ENCODE measurements at regions of chr15 and their contacts with region 1.

Region 1: DNA sequence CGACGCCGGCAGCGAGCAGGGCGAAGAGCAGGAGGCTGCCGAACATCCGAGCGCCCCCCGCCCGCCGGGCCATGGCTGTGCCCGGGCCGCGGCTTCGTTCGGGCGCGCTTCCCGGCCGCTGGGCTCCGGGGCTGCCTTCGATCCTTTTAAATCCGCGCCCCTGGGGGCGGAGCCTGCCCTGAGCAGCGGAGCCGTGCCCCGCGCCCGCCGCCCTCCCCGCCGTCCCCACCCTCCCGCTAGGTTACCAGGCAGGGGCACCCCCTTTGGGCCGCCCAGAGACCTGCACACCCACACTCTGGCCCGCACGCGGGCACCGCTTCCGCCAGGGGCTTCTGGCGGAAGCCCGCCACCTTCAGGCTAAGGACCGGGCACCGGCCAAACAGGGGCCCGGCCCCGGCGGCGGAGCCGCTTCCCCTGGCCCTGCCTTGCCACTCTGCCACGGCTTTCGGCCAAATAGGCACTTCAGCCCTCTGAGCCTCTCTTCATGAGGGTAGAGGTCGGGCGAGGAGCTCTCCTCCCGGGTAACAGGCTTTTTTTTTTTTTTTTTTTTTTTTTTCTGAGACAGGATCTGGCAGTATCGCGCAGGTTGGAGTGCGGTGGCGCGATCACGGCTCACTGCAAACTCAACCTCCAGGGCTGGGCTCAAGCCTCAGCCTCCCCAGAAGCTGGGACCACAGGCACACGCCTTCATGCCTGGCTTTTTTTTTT is at the start of gene NMB:
- DNase-seq: peak; percentile 89
- ATAC-seq: peak; percentile 56
- H3K4me3 Mint-ChIP-seq: peak within 1 kb of the TSS; percentile 69
- H3K27ac Mint-ChIP-seq: peak within 1 kb of the TSS; percentile 66
- H3K4me1 Mint-ChIP-seq: peaks cover 30% of the 10 kb centered on the region
- H3K27me3 Mint-ChIP-seq: no peaks in the 10 kb centered on the region
- total RNA-seq, gene NMB: 2.7 to 4.0 TPM

Region 2: GRCh38 chr15:84588053-84588874 is 70.0 kb before region 1 on chr15:
- CTCF ChIA-PET with region 1: interaction called, 4 read pairs
- POLR2A ChIA-PET with region 1: no interaction called
- intact Hi-C with region 1: loop called (anchors 1 kb)
- DNase-seq: peak; percentile 93
- ATAC-seq: peak; percentile 100
- H3K4me3 Mint-ChIP-seq: peak overlapping the region; percentile 35
- H3K27ac Mint-ChIP-seq: no peak overlapping the region
- H3K4me1 Mint-ChIP-seq: peaks cover 2% of the 10 kb centered on the region
- H3K27me3 Mint-ChIP-seq: no peaks in the 10 kb centered on the region

Region 3: DNA sequence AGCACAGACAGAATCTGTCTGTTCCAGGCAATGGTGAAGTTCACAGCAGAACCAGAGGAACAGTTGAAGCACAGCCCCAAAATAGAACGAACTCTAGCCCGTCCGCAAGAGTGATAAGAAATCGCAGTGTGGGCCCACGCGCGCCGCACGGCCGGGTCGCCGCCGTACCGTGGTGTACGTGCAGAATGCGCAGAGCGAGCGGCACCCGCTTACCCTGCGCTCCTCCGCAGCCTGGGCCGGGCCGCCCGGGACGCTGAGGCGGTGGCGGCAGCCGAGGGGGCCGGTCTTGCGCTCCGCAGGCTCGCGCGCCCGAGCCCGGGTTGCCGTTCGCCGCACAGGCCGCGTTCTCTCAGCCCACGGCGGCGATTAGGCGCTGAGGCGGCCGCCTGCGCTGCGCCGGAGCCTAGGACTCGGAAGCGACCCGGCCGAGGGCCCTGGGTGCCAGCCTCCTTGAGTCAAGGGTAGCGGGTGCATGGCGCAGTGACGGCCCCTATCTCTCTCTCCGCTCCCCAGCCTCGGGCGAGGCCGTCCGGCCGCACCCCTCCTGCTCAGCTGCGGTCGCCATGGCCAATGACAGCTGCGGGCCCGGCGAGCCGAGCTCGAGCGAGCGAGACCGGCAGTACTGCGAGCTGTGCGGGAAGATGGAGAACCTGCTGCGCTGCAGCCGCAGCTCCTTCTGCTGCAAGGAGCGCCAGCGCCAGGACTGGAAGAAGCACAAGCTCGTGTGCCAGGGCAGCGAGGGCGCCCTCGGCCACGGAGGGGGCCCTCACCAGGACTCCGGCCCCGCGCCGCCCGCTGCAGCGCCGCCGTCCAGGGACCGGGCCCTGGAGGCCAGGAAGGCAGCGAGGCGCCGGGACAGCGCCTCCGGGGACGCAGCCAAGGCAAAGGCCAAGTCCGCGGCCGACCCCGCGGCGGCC is 24.7 kb before region 1 on chr15:
- CTCF ChIA-PET with region 1: interaction called, 6 read pairs
- POLR2A ChIA-PET with region 1: interaction called, 4 read pairs
- intact Hi-C with region 1: loop called (anchors 1 kb)
- DNase-seq: peak; percentile 87
- ATAC-seq: peak; percentile 57
- H3K4me3 Mint-ChIP-seq: peak overlapping the region; percentile 93
- H3K27ac Mint-ChIP-seq: peak overlapping the region; percentile 99
- H3K4me1 Mint-ChIP-seq: peaks cover 45% of the 10 kb centered on the region
- H3K27me3 Mint-ChIP-seq: no peaks in the 10 kb centered on the region

Region 4: GRCh38 chr15:84716036-84716799 is 58.0 kb after region 1 on chr15 and contains the start of gene SEC11A:
- CTCF ChIA-PET with region 1: interaction called, 4 read pairs
- POLR2A ChIA-PET with region 1: interaction called, 5 read pairs
- intact Hi-C with region 1: loop called (anchors 1 kb)
- DNase-seq: peak; percentile 94
- ATAC-seq: peak; percentile 89
- H3K4me3 Mint-ChIP-seq: peak within 1 kb of the TSS; percentile 98
- H3K27ac Mint-ChIP-seq: peak within 1 kb of the TSS; percentile 97
- H3K4me1 Mint-ChIP-seq: peaks cover 55% of the 10 kb centered on the region
- H3K27me3 Mint-ChIP-seq: no peaks in the 10 kb centered on the region
- total RNA-seq, gene SEC11A: 66.6 to 111 TPM

Region 5: GRCh38 chr15:84748274-84749110 is 90.3 kb after region 1 on chr15 and contains the start of gene ZNF592:
- CTCF ChIA-PET with region 1: interaction called, 5 read pairs
- POLR2A ChIA-PET with region 1: interaction called, 3 read pairs
- intact Hi-C with region 1: loop called (anchors 1 kb)
- DNase-seq: peak; percentile 86
- ATAC-seq: peak; percentile 55
- H3K4me3 Mint-ChIP-seq: peak within 1 kb of the TSS; percentile 94
- H3K27ac Mint-ChIP-seq: peak within 1 kb of the TSS; percentile 97
- H3K4me1 Mint-ChIP-seq: peaks cover 59% of the 10 kb centered on the region
- H3K27me3 Mint-ChIP-seq: no peaks in the 10 kb centered on the region
- total RNA-seq, gene ZNF592: 25.5 to 30.8 TPM

Region 6: GRCh38 chr15:84883433-84883832 is 225.2 kb after region 1 on chr15:
- CTCF ChIA-PET with region 1: interaction called, 6 read pairs
- POLR2A ChIA-PET with region 1: no interaction called
- intact Hi-C with region 1: loop called (anchors 1 kb)
- DNase-seq: no peak
- ATAC-seq: no peak
- H3K4me3 Mint-ChIP-seq: no peak overlapping the region
- H3K27ac Mint-ChIP-seq: no peak overlapping the region
- H3K4me1 Mint-ChIP-seq: no peaks in the 10 kb centered on the region
- H3K27me3 Mint-ChIP-seq: no peaks in the 10 kb centered on the region

Region 7: GRCh38 chr15:84981054-84981710 is 322.9 kb after region 1 on chr15:
- CTCF ChIA-PET with region 1: interaction called, 5 read pairs
- POLR2A ChIA-PET with region 1: interaction called, 6 read pairs
- intact Hi-C with region 1: loop called in 1 of 2 experiments (anchors 1 kb)
- DNase-seq: peak; percentile 97
- ATAC-seq: peak; percentile 80
- H3K4me3 Mint-ChIP-seq: peak overlapping the region; percentile 84
- H3K27ac Mint-ChIP-seq: peak overlapping the region; percentile 89
- H3K4me1 Mint-ChIP-seq: peaks cover 43% of the 10 kb centered on the region
- H3K27me3 Mint-ChIP-seq: no peaks in the 10 kb centered on the region

Region 8: DNA sequence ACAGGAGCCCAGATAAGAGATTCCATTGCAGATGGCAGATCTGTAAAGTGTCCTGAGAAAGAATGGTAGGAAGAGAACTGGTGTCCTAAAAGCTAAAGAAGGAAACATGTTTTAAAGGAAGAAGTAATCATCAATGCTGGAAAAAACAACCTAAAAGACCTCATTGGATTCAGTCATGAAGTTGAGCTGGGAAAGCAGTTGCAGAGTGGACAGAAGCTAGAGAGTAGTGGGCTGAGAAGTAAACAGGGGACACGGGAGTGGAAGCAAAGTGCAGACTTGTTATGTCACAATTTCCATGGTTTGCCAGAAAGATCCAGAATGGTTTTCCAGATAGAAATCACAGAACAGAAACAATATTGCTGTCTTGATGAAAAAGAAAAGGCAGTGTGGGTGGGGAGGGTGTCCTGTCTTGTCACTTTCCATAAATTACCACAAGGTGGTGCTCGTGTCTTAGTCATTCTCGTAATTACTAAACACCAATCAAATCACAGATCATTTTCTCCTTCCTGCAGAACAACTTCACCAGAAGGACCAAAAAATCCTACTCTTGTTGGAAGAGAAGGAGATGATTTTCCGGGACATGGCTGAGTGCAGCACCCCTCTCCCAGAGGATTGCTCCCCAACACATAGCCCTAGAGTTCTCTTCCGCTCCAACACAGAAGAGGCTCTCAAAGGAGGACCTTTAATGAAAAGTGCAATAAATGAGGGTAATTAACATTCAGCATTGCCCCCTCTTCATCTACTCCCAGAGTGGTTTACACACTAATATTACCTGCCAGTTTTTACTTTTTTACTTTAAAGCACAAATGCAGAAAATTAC is 1072.0 kb after region 1 on chr15:
- CTCF ChIA-PET with region 1: no interaction called
- POLR2A ChIA-PET with region 1: no interaction called
- intact Hi-C with region 1: no loop called
- DNase-seq: peak; percentile 57
- ATAC-seq: peak; percentile 79
- H3K4me3 Mint-ChIP-seq: no peak overlapping the region
- H3K27ac Mint-ChIP-seq: peak overlapping the region; percentile 88
- H3K4me1 Mint-ChIP-seq: peaks cover 27% of the 10 kb centered on the region
- H3K27me3 Mint-ChIP-seq: no peaks in the 10 kb centered on the region